Transverse colon (tissue), 4 donors: ENCODE measurements at regions of chr19 and their contacts with region 1.

Region 1: GRCh38 chr19:21474671-21475181 is 30.7 kb upstream of the ZNF429 start:
- DNase-seq: peak; percentile 50
- H3K4me3 ChIP-seq: peak overlapping the region in 3 of 4 donors; percentile 20 to 39 (median 38)
- H3K27ac ChIP-seq: no peak overlapping the region
- H3K4me1 ChIP-seq: peaks cover 0 to 7% (median 0%) of the 10 kb centered on the region in 4 donors
- H3K27me3 ChIP-seq: peaks cover 9% of the 10 kb centered on the region
- CTCF ChIP-seq: no peak
- EP300 ChIP-seq: no peak
- POLR2A ChIP-seq: no peak

Region 2: DNA sequence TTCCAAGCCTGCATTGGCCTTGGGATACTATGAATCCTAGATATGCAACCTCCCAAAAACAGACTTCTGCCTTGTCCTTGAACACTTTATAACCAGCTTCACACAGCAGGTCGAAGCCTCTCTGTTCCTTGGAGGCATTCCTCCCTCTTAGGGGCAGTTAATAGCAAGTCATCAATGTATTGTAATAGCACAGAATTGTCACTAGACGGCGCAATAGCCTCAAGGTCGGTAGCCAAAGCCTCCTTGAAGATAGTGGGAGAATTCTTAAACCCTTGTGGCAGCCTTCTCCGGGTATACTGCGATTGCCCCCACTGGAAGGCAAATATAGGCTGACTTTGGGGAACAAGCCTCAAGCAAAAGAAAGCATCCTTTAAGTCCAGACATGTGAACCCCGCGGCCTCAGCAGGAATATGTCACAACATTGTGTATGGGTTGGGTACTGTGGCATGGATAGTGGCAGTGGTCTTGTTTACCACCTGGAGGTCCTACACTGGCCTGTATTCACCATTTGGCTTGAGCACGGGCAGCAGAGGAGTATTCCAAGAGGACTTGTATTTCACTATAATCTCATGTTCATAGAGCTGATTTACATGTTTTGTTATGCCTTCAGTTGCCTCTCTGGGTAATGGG is 271.7 kb before region 1 on chr19:
- in situ Hi-C with region 1: loop called in 1 of 4 experiments (anchors 25 kb)
- intact Hi-C with region 1: no loop called
- DNase-seq: no peak
- H3K4me3 ChIP-seq: no peak overlapping the region
- H3K27ac ChIP-seq: no peak overlapping the region
- H3K4me1 ChIP-seq: no peaks in the 10 kb centered on the region
- H3K27me3 ChIP-seq: no peaks in the 10 kb centered on the region
- CTCF ChIP-seq: peak; percentile 41 to 53 (median 50)
- EP300 ChIP-seq: no peak
- POLR2A ChIP-seq: no peak

Region 3: GRCh38 chr19:21454901-21455300 is 19.8 kb before region 1 on chr19:
- in situ Hi-C with region 1: no loop called
- intact Hi-C with region 1: no loop called
- DNase-seq: no peak
- H3K4me3 ChIP-seq: no peak overlapping the region
- H3K27ac ChIP-seq: no peak overlapping the region
- H3K4me1 ChIP-seq: no peaks in the 10 kb centered on the region
- H3K27me3 ChIP-seq: no peaks in the 10 kb centered on the region
- CTCF ChIP-seq: no peak
- EP300 ChIP-seq: no peak
- POLR2A ChIP-seq: no peak

Region 4: GRCh38 chr19:21498651-21499050 is 23.9 kb after region 1 on chr19:
- in situ Hi-C with region 1: no loop called
- intact Hi-C with region 1: loop called (anchors 1 kb)
- DNase-seq: no peak
- H3K4me3 ChIP-seq: no peak overlapping the region
- H3K27ac ChIP-seq: no peak overlapping the region
- H3K4me1 ChIP-seq: no peaks in the 10 kb centered on the region
- H3K27me3 ChIP-seq: no peaks in the 10 kb centered on the region
- CTCF ChIP-seq: no peak
- EP300 ChIP-seq: no peak
- POLR2A ChIP-seq: no peak

Region 5: GRCh38 chr19:21698215-21698614 is 223.5 kb after region 1 on chr19:
- in situ Hi-C with region 1: loop called in 1 of 4 experiments (anchors 25 kb)
- intact Hi-C with region 1: no loop called
- DNase-seq: no peak
- H3K4me3 ChIP-seq: no peak overlapping the region
- H3K27ac ChIP-seq: no peak overlapping the region
- H3K4me1 ChIP-seq: no peaks in the 10 kb centered on the region
- H3K27me3 ChIP-seq: no peaks in the 10 kb centered on the region
- CTCF ChIP-seq: peak; percentile 36 to 59 (median 57)
- EP300 ChIP-seq: no peak
- POLR2A ChIP-seq: no peak